ENCODE measurements at regions of chr10 and their contacts with region 1.

Region 1: DNA sequence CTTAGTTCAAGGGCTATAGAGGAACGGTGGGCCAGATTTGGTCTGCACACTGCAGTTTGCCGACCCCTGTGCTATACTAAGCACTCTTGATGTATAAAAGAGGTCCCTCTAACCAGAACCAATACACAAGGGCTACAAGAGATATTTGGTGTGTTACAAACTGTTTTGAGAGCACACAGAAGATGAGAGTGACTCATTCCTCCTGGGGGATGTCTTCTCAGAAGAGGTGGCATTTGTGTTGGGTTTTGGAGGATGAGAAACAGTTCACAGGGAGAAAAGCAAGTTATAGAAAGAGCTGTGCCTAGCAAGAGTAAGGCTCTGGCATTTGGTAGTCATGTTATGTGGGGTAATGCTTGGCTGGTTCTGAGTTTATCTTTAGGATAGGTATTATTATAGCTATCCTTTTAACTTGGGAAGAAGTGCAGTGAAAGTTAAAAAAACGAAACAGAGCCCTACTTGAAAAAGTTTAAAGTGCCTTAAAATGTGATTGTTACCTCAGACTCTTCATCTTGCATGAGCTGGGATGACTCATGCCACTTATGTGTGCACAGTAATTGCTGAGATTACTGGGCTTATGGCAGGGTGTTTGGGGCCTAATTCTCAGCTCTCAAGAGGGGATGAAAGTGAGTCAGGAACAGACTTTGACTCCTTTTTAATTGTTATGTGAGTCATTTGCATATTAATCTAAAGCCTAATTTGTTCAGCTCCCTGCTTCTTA is 160.4 kb downstream of the KIF20B start:
- DNase-seq: no peak
- ATAC-seq: peak; percentile 64
- H3K4me3 ChIP-seq: no peak overlapping the region
- H3K4me3 Mint-ChIP-seq: peak overlapping the region; percentile 51
- H3K27ac ChIP-seq: no peak overlapping the region
- H3K27ac Mint-ChIP-seq: peak overlapping the region; percentile 73
- H3K4me1 ChIP-seq: peaks cover 11 to 16% of the 10 kb centered on the region in 2 donors
- H3K4me1 Mint-ChIP-seq: peaks cover 21% of the 10 kb centered on the region
- H3K27me3 ChIP-seq: no peaks in the 10 kb centered on the region
- H3K27me3 Mint-ChIP-seq: no peaks in the 10 kb centered on the region
- CTCF ChIP-seq: no peak

Region 2: DNA sequence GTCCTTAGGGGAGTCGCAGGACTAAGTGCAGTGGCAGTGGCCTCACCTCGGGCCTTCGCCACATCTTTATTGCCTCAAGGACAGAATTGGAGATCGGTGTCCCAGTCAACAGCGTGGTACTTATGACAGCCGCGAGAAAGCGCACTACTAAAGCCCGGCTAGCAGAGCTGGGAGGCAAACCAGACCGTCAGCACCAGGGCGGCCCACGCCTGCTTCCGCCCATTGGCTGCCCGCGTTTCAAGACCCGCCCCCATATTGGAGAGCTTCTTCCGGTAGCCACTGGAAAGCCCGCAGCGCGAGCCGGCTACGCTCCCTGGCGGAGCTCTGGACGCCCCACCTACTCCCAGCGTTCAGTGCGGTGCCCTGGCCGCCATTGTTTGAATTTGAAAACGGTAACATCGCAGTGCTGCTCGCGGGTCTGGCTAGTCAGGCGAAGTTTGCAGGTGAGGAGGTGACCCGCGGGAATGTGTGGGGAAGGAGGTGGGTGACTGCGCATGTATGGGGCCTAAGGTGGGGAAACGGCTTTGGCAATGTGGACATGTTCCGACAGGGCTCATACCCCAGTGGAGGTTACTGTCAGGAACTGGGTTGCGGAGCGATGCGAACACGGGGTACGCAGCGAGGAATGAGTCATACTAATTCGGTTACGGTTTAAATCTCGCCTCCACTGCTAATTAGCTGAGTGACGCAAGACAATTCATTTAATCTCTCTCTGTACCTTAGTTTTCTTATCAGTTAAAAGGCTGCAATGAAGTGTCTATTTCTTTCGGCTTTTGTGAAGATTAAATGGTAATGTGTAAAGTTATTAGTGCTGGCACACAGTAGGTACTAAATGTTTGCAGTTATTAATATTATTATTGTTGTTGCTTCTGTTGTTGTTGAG is 160.3 kb before region 1 on chr10 and contains the start of gene KIF20B:
- CTCF ChIA-PET with region 1: no interaction called
- POLR2A ChIA-PET with region 1: no interaction called
- intact Hi-C with region 1: no loop called
- DNase-seq: peak; percentile 95
- ATAC-seq: peak; percentile 98
- H3K4me3 ChIP-seq: peak within 1 kb of the TSS; percentile 86 to 98 (median 95)
- H3K4me3 Mint-ChIP-seq: peak within 1 kb of the TSS; percentile 99
- H3K27ac ChIP-seq: peak within 1 kb of the TSS; percentile 79 to 87
- H3K27ac Mint-ChIP-seq: peak within 1 kb of the TSS; percentile 99
- H3K4me1 ChIP-seq: peaks cover 9 to 10% of the 10 kb centered on the region in 2 donors
- H3K4me1 Mint-ChIP-seq: peaks cover 32% of the 10 kb centered on the region
- H3K27me3 ChIP-seq: no peaks in the 10 kb centered on the region
- H3K27me3 Mint-ChIP-seq: no peaks in the 10 kb centered on the region
- CTCF ChIP-seq: peak; percentile 29
- total RNA-seq, gene KIF20B: 24.6 and 25.3 TPM in 2 replicates

Region 3: DNA sequence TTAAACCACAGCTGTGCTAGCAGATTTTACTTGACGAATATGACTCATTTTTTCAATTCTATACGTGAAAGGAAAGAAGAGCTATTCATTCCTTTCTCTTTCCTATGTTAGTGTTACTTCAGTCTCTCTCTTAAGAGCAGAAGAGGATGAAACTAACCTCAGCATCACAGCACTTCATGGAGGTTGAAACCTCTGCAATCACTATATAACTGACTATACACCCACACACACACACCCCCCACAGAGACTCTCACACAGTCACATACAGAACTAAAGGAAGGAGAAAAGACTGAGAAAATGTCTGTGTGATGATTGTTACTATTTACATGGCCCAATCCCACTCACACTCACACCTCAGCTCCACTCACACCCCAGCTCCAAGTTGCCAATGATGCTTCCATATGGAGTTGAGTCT is 56.1 kb before region 1 on chr10:
- CTCF ChIA-PET with region 1: no interaction called
- POLR2A ChIA-PET with region 1: no interaction called
- intact Hi-C with region 1: no loop called
- DNase-seq: no peak
- ATAC-seq: no peak
- H3K4me3 ChIP-seq: no peak overlapping the region
- H3K4me3 Mint-ChIP-seq: no peak overlapping the region
- H3K27ac ChIP-seq: no peak overlapping the region
- H3K27ac Mint-ChIP-seq: no peak overlapping the region
- H3K4me1 ChIP-seq: no peaks in the 10 kb centered on the region
- H3K4me1 Mint-ChIP-seq: no peaks in the 10 kb centered on the region
- H3K27me3 ChIP-seq: no peaks in the 10 kb centered on the region
- H3K27me3 Mint-ChIP-seq: peaks cover 11% of the 10 kb centered on the region
- CTCF ChIP-seq: no peak

Region 4: GRCh38 chr10:89897361-89897760 is 35.6 kb after region 1 on chr10:
- CTCF ChIA-PET with region 1: no interaction called
- POLR2A ChIA-PET with region 1: no interaction called
- intact Hi-C with region 1: loop called (anchors 5 kb)
- DNase-seq: no peak
- ATAC-seq: no peak
- H3K4me3 ChIP-seq: no peak overlapping the region
- H3K4me3 Mint-ChIP-seq: no peak overlapping the region
- H3K27ac ChIP-seq: no peak overlapping the region
- H3K27ac Mint-ChIP-seq: no peak overlapping the region
- H3K4me1 ChIP-seq: peaks cover 13 to 16% of the 10 kb centered on the region in 2 donors
- H3K4me1 Mint-ChIP-seq: peaks cover 34% of the 10 kb centered on the region
- H3K27me3 ChIP-seq: no peaks in the 10 kb centered on the region
- H3K27me3 Mint-ChIP-seq: no peaks in the 10 kb centered on the region
- CTCF ChIP-seq: no peak

Region 5: DNA sequence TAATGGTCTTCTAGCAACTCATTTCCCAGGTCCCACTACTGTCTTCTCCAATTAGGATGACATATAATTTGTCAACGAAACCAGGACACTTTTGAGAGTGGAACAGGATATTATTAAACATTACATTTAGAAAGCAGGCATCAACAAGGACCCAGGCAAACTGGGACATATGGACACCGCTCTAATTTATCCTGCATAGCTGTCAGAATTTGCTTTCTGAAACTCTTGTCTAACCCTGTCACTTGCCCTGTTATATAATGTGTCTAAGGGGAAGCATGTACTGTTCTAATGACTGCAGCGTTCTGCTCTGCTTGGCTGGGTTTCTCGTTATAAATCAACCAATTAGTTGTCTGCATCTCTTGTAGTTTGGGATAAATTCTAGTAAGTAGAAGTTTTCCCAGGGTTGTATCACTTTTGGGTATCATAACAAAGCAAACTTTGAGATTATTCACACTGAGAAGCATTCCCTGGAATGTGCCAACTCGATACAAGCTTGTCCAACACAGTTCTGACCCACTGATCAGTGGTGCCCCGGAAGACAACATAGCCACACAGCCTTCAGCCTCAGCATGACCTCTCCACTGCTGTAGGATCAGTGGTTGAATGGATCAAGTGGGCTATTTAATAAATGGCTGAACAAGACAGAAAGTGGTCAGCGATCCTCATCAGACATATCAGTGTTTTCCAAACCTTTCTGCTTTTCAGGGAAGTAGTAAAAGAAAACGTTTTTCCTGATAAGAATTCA is 67.7 kb after region 1 on chr10:
- CTCF ChIA-PET with region 1: no interaction called
- POLR2A ChIA-PET with region 1: no interaction called
- intact Hi-C with region 1: no loop called
- DNase-seq: no peak
- ATAC-seq: no peak
- H3K4me3 ChIP-seq: no peak overlapping the region
- H3K4me3 Mint-ChIP-seq: peak overlapping the region; percentile 36
- H3K27ac ChIP-seq: no peak overlapping the region
- H3K27ac Mint-ChIP-seq: no peak overlapping the region
- H3K4me1 ChIP-seq: no peaks in the 10 kb centered on the region
- H3K4me1 Mint-ChIP-seq: peaks cover 9% of the 10 kb centered on the region
- H3K27me3 ChIP-seq: no peaks in the 10 kb centered on the region
- H3K27me3 Mint-ChIP-seq: peaks cover 9% of the 10 kb centered on the region
- CTCF ChIP-seq: no peak